CD4-positive, alpha-beta T cell (primary cell): ENCODE measurements at regions of chr12 and their contacts with region 1.

Region 1: GRCh38 chr12:123075646-123076171 is 75.2 kb downstream of the PITPNM2 start:
- DNase-seq: peak; percentile 49 to 90 (median 70)
- ATAC-seq: peak; percentile 83
- H3K4me3 ChIP-seq: peak overlapping the region; percentile 61
- H3K4me3 Mint-ChIP-seq: peak overlapping the region; percentile 81
- H3K27ac ChIP-seq: peak overlapping the region; percentile 66 to 81
- H3K27ac Mint-ChIP-seq: peak overlapping the region; percentile 90
- H3K4me1 ChIP-seq: peaks cover 67% of the 10 kb centered on the region
- H3K4me1 Mint-ChIP-seq: peaks cover 70% of the 10 kb centered on the region
- H3K27me3 ChIP-seq: no peaks in the 10 kb centered on the region
- H3K27me3 Mint-ChIP-seq: no peaks in the 10 kb centered on the region
- CTCF ChIP-seq: peak; percentile 59

Region 2: GRCh38 chr12:122767691-122768090 is 308.0 kb before region 1 on chr12:
- CTCF ChIA-PET with region 1: no interaction called
- POLR2A ChIA-PET with region 1: no interaction called
- intact Hi-C with region 1: loop called in 1 of 2 experiments (anchors 5 kb)
- DNase-seq: no peak
- ATAC-seq: no peak
- H3K4me3 ChIP-seq: no peak overlapping the region
- H3K4me3 Mint-ChIP-seq: no peak overlapping the region
- H3K27ac ChIP-seq: no peak overlapping the region
- H3K27ac Mint-ChIP-seq: no peak overlapping the region
- H3K4me1 ChIP-seq: no peaks in the 10 kb centered on the region
- H3K4me1 Mint-ChIP-seq: no peaks in the 10 kb centered on the region
- H3K27me3 ChIP-seq: no peaks in the 10 kb centered on the region
- H3K27me3 Mint-ChIP-seq: no peaks in the 10 kb centered on the region
- CTCF ChIP-seq: no peak

Region 3: GRCh38 chr12:123043536-123044001 is 32.1 kb before region 1 on chr12:
- CTCF ChIA-PET with region 1: interaction called, 15 read pairs
- POLR2A ChIA-PET with region 1: interaction called, 23 read pairs
- intact Hi-C with region 1: loop called (anchors 1 to 2 kb)
- DNase-seq: peak; percentile 44 to 84 (median 68)
- ATAC-seq: peak; percentile 97
- H3K4me3 ChIP-seq: no peak overlapping the region
- H3K4me3 Mint-ChIP-seq: peak overlapping the region; percentile 42
- H3K27ac ChIP-seq: no peak overlapping the region
- H3K27ac Mint-ChIP-seq: peak overlapping the region; percentile 80
- H3K4me1 ChIP-seq: peaks cover 21% of the 10 kb centered on the region
- H3K4me1 Mint-ChIP-seq: peaks cover 27% of the 10 kb centered on the region
- H3K27me3 ChIP-seq: no peaks in the 10 kb centered on the region
- H3K27me3 Mint-ChIP-seq: no peaks in the 10 kb centered on the region
- CTCF ChIP-seq: peak; percentile 58

Region 4: GRCh38 chr12:123106628-123107359 is 31.1 kb after region 1 on chr12:
- CTCF ChIA-PET with region 1: interaction called, 8 read pairs
- POLR2A ChIA-PET with region 1: interaction called, 24 read pairs
- intact Hi-C with region 1: no loop called
- DNase-seq: peak in 13 of 14 experiments; percentile 28 to 84 (median 57)
- ATAC-seq: peak; percentile 94
- H3K4me3 ChIP-seq: peak overlapping the region; percentile 29
- H3K4me3 Mint-ChIP-seq: peak overlapping the region; percentile 66
- H3K27ac ChIP-seq: peak overlapping the region; percentile 56 to 85
- H3K27ac Mint-ChIP-seq: peak overlapping the region; percentile 98
- H3K4me1 ChIP-seq: peaks cover 53% of the 10 kb centered on the region
- H3K4me1 Mint-ChIP-seq: peaks cover 64% of the 10 kb centered on the region
- H3K27me3 ChIP-seq: no peaks in the 10 kb centered on the region
- H3K27me3 Mint-ChIP-seq: no peaks in the 10 kb centered on the region
- CTCF ChIP-seq: no peak

Region 5: DNA sequence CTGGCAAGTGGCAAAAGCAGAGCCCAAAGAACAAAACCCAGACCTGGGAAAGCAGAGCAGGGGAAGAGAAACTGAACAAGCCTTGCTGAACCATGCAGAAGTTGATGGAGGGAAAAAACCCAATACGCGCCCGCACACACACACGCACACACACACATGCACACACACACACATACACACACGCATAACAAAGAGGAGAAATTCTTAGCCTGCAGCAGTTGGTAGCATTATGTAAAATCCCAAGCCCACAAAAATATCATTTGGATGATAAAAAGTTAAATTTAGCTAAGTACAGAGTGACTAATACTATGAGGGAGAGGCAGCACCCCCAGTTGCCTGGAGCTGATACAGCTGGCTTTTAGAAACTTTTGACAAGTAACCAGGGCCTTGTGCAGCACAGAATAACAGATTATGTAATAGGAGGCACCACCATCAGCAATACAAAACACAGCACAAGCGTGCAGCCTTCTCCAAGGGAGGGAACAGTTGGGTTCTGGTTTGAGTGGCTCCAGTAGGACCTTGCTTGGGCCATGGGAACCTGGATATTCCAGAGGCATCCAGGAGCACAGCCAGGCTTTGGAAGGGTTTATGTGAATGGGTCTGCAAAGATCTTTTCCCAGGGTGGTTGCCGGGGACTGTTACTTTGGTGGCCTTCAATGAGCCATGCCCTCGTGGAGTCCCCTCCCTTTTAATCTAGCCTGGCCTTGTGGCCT is 39.9 kb after region 1 on chr12:
- CTCF ChIA-PET with region 1: interaction called, 10 read pairs
- POLR2A ChIA-PET with region 1: interaction called, 57 read pairs
- intact Hi-C with region 1: loop called in 1 of 2 experiments (anchors 2 kb)
- DNase-seq: peak in 7 of 14 experiments; percentile 20 to 64 (median 44)
- ATAC-seq: peak; percentile 89
- H3K4me3 ChIP-seq: no peak overlapping the region
- H3K4me3 Mint-ChIP-seq: peak overlapping the region; percentile 66
- H3K27ac ChIP-seq: peak overlapping the region; percentile 30 to 64
- H3K27ac Mint-ChIP-seq: peak overlapping the region; percentile 99
- H3K4me1 ChIP-seq: peaks cover 53% of the 10 kb centered on the region
- H3K4me1 Mint-ChIP-seq: peaks cover 80% of the 10 kb centered on the region
- H3K27me3 ChIP-seq: no peaks in the 10 kb centered on the region
- H3K27me3 Mint-ChIP-seq: no peaks in the 10 kb centered on the region
- CTCF ChIP-seq: no peak

Region 6: GRCh38 chr12:123120452-123121166 is 44.9 kb after region 1 on chr12:
- CTCF ChIA-PET with region 1: interaction called, 10 read pairs
- POLR2A ChIA-PET with region 1: interaction called, 57 read pairs
- intact Hi-C with region 1: loop called in 1 of 2 experiments (anchors 2 kb)
- DNase-seq: peak in 13 of 14 experiments; percentile 21 to 65 (median 39)
- ATAC-seq: peak; percentile 60
- H3K4me3 ChIP-seq: no peak overlapping the region
- H3K4me3 Mint-ChIP-seq: peak overlapping the region; percentile 82
- H3K27ac ChIP-seq: peak overlapping the region; percentile 58 to 77
- H3K27ac Mint-ChIP-seq: peak overlapping the region; percentile 99
- H3K4me1 ChIP-seq: peaks cover 67% of the 10 kb centered on the region
- H3K4me1 Mint-ChIP-seq: peaks cover 77% of the 10 kb centered on the region
- H3K27me3 ChIP-seq: no peaks in the 10 kb centered on the region
- H3K27me3 Mint-ChIP-seq: no peaks in the 10 kb centered on the region
- CTCF ChIP-seq: no peak

Region 7: GRCh38 chr12:123150744-123151456 is 75.2 kb after region 1 on chr12 and contains the start of gene PITPNM2:
- CTCF ChIA-PET with region 1: interaction called, 6 read pairs
- POLR2A ChIA-PET with region 1: interaction called, 44 read pairs
- intact Hi-C with region 1: loop called (anchors 2 kb)
- DNase-seq: peak; percentile 28 to 87 (median 60)
- ATAC-seq: peak; percentile 86
- H3K4me3 ChIP-seq: peak within 1 kb of the TSS; percentile 76
- H3K4me3 Mint-ChIP-seq: peak within 1 kb of the TSS; percentile 93
- H3K27ac ChIP-seq: peak within 1 kb of the TSS; percentile 22 to 40
- H3K27ac Mint-ChIP-seq: peak within 1 kb of the TSS; percentile 89
- H3K4me1 ChIP-seq: peaks cover 27% of the 10 kb centered on the region
- H3K4me1 Mint-ChIP-seq: peaks cover 52% of the 10 kb centered on the region
- H3K27me3 ChIP-seq: no peaks in the 10 kb centered on the region
- H3K27me3 Mint-ChIP-seq: no peaks in the 10 kb centered on the region
- CTCF ChIP-seq: no peak
- total RNA-seq, gene PITPNM2: 37.3 to 38.3 TPM